Activated CD4-positive, alpha-beta T cell treated with anti-CD3 and anti-CD28 coated beads, Interleukin-2, amount 10 ng/mL, durations not matched to agents 24 days and 14 days (primary cell): ENCODE measurements at regions of chr17 and their contacts with region 1.

Region 1: DNA sequence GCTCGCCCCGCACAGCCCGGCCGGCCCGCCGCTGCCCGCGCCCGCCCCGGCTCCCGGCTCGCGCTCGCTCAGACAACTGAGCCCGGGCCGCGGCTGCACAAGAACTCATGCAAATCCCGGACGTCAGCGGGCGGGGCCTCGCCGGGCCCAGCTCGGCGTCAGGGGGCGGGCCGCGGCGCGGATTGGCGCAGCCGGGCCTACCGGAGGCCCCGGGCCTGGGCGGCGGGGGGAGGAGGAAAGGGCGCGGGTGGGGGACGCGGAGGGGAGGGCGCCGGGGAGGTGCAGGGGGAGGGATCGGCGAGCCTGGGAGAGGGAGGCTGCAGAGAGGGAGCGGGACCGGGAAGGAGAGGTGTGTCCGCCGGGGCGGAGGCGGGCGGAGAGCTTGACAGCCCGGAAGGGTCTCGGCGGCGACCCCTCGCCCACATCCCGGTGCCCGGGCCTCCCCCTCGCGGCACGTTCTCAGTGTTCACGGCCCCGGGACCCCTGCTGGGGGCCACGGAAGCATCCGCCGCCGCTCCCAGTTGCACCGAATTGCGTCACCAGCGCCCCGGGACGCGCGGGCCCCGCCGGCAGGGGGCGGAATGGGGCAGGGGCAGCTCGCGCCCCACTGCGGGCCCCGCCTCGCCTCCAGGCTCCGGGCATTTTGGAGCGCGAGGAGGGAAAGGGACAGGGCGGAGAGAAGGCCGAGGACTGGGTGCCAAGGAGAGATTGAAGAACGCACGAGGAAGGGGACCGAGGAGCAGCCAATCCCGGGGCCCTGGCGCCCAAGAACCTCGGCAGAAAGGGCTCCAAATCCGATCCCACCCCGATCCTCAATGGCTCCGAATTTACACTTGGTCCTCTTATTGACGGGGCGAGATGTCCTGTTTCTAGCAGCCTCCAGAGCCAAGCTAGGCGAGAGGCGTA is at the start of gene CBX4:
- DNase-seq: peak; percentile 96
- H3K4me3 Mint-ChIP-seq: peak within 1 kb of the TSS; percentile 97
- H3K27ac Mint-ChIP-seq: peak within 1 kb of the TSS; percentile 90
- H3K4me1 Mint-ChIP-seq: peaks cover 26% of the 10 kb centered on the region
- H3K27me3 Mint-ChIP-seq: peaks cover 29% of the 10 kb centered on the region
- total RNA-seq, gene CBX4: 18.5 and 19.4 TPM in 2 replicates

Region 2: DNA sequence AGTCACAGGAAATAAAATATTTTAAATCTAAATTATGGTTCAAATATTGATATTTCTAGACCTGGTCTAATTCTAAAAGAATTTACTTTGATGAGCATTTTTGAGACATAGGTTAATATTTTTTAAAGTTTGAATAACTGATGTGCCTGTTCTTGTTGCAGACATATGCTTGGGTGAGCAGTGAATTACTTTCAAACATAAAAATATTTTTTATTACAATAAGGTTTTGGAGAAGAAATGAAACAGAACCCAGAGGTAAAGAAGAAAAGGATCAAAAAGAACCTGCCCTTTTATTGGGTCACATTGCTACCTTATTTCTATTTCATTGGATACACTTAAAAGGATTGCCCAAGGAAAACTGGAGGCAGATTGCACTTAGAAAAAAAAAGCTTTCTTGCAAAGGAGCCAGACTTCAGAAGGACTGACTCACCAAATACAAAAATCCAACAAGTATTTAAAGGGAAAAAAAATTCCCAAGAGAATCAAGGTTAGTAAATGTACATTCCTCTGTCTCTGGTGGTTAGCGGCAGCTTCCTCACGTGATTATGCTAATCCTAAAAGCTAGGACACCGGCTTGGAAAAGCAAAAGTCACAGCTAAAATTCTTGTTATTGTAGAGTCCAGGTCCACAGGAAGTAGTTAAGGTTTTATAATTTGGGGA is 90.3 kb before region 1 on chr17:
- intact Hi-C with region 1: loop called (anchors 2 kb)
- DNase-seq: no peak
- H3K4me3 Mint-ChIP-seq: no peak overlapping the region
- H3K27ac Mint-ChIP-seq: no peak overlapping the region
- H3K4me1 Mint-ChIP-seq: peaks cover 13% of the 10 kb centered on the region
- H3K27me3 Mint-ChIP-seq: peaks cover 41% of the 10 kb centered on the region

Region 3: DNA sequence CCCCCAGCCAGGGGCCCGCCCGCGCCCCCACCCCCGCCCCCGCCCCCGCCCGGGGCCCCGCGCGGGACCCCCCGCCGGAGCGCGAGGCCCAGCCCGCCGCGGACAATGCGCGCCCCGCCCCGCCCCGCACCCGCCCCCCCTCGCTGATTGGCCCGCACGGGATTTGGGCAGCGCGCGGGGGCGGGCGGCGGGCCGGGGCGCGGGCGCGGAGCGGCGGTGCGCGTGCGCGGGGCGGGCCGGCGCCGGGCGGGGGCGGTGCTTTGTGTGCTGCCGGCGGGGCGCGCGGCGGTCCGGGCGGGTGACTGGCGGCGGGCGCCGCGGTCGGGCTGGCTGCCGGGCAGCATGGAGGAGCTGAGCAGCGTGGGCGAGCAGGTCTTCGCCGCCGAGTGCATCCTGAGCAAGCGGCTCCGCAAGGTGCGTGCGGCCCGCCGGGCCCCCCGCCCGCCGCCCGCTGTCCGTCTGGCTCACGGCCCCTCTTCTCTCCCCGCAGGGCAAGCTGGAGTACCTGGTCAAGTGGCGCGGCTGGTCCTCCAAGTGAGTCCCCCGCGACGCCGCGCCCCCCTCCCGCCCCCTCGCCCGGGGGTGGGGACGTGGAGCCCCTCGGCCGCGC is 61.6 kb before region 1 on chr17 and contains the start of gene CBX2:
- intact Hi-C with region 1: no loop called
- DNase-seq: peak; percentile 96
- H3K4me3 Mint-ChIP-seq: peak within 1 kb of the TSS; percentile 91
- H3K27ac Mint-ChIP-seq: peak within 1 kb of the TSS; percentile 85
- H3K4me1 Mint-ChIP-seq: peaks cover 14% of the 10 kb centered on the region
- H3K27me3 Mint-ChIP-seq: peaks cover 64% of the 10 kb centered on the region
- total RNA-seq, gene CBX2: 7.5 and 8.2 TPM in 2 replicates

Region 4: DNA sequence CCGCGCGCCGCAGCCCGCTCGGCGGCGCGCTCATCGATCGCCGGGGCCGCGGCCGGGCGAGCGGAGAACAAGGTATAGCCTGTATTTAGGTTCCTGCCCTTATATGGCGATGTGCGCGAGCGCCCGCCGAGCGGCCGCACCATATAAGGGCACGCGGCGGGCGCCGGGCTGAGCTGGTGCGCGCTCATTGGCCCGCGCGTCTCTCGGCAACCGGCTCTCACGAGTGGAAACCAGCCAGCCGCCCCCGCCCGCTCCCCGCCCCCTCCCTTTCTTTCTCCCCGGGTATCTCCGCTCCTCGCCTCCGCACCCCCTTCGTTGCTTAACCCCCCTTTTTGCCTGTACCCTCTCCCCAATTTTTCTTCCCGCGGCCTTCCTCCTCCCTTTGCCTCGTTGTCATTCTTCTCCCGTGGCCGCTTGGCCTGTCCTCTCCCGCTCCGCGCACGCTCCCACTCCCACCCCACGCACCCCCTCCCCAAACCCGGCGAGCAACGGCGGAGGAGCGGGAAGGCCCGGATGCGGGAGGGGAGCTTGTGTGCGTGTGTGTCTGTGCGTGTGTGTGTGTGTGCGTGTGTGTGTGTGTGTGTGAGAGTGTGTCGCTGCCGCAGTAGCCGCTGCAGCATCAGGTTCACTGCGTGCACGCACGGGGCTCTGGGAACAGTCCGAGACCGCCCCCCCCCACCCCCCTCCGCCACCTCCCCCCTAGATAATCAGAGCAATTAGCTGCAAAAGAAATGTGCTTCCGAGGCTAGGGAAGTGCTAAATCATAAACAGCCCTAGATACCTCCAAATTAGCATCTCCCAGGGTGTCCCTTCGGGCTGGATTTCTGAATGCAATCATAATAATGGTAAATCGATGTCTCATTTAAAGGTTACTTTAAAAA is 29.2 kb before region 1 on chr17:
- intact Hi-C with region 1: loop called (anchors 1 kb)
- DNase-seq: peak; percentile 94
- H3K4me3 Mint-ChIP-seq: peak overlapping the region; percentile 55
- H3K27ac Mint-ChIP-seq: peak overlapping the region; percentile 32
- H3K4me1 Mint-ChIP-seq: peaks cover 31% of the 10 kb centered on the region
- H3K27me3 Mint-ChIP-seq: peaks cover 56% of the 10 kb centered on the region

Region 5: GRCh38 chr17:79888811-79889634 is 49.4 kb after region 1 on chr17:
- intact Hi-C with region 1: no loop called
- DNase-seq: no peak
- H3K4me3 Mint-ChIP-seq: no peak overlapping the region
- H3K27ac Mint-ChIP-seq: no peak overlapping the region
- H3K4me1 Mint-ChIP-seq: no peaks in the 10 kb centered on the region
- H3K27me3 Mint-ChIP-seq: peaks cover 11% of the 10 kb centered on the region

Region 6: GRCh38 chr17:79905832-79906231 is 66.2 kb after region 1 on chr17:
- intact Hi-C with region 1: no loop called
- DNase-seq: no peak
- H3K4me3 Mint-ChIP-seq: no peak overlapping the region
- H3K27ac Mint-ChIP-seq: no peak overlapping the region
- H3K4me1 Mint-ChIP-seq: no peaks in the 10 kb centered on the region
- H3K27me3 Mint-ChIP-seq: peaks cover 11% of the 10 kb centered on the region

Region 7: DNA sequence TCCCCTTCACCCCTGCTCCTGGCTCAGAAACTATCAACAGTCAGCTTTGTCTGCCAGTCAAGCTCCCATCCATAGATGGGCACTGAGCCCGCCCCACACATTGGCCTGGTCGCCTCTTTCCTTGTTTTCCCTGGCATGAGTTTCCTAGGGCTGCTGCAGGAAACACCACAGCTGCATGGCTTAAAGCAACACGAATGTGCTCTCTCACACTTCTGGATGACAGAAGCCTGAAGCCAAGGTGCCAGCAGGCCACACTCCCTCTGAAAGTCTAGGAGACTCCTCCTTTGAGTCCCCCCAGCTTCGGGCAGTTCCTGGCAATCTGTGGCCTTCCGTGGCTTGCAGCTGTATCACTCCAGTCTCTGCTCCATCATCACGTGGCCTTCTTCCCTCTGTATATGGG is 126.2 kb after region 1 on chr17:
- intact Hi-C with region 1: no loop called
- DNase-seq: no peak
- H3K4me3 Mint-ChIP-seq: no peak overlapping the region
- H3K27ac Mint-ChIP-seq: no peak overlapping the region
- H3K4me1 Mint-ChIP-seq: peaks cover 2% of the 10 kb centered on the region
- H3K27me3 Mint-ChIP-seq: peaks cover 18% of the 10 kb centered on the region

Region 8: DNA sequence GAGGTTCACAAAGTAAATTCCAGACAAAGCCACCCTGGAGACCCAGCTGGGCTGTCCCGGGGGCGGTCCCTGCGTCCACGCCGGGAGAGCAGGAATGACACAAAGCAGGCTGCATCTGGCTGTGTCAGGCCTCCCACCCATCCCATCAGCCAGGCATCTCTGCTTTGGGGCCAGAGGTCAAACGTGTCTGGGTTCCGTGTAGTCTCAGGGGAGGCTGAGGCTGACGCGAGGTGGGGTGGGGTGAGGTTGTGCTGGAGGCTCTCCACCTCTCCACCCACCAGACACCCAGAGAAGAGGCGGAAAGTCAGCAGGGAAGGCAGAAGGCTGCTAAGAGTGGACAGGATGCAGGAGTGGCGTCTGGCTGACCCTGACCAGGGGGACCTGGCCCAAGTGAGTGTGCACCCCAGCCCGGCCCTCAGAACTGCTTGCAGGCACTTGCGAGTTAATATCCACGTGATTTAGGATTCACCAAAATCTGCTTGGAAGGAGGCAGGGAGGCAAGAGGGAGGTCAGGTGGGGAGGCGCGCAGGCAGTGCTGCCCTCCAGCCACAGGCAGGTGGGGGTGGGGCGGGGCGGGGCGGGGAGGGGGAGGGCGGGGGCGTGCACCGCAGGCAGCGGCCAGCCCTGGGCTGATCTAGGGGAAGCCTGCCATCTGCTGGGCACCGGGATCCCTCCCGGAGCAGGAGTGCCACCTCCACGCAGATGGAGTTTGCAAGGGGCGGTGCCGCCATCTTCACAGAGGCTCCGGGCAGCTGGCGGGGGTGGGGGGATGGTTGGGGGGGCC is 151.7 kb after region 1 on chr17:
- intact Hi-C with region 1: loop called (anchors 5 kb)
- DNase-seq: peak; percentile 94
- H3K4me3 Mint-ChIP-seq: peak overlapping the region; percentile 79
- H3K27ac Mint-ChIP-seq: no peak overlapping the region
- H3K4me1 Mint-ChIP-seq: peaks cover 23% of the 10 kb centered on the region
- H3K27me3 Mint-ChIP-seq: peaks cover 6% of the 10 kb centered on the region